ENCODE measurements at regions of chr13 and their contacts with region 1.

Region 1: DNA sequence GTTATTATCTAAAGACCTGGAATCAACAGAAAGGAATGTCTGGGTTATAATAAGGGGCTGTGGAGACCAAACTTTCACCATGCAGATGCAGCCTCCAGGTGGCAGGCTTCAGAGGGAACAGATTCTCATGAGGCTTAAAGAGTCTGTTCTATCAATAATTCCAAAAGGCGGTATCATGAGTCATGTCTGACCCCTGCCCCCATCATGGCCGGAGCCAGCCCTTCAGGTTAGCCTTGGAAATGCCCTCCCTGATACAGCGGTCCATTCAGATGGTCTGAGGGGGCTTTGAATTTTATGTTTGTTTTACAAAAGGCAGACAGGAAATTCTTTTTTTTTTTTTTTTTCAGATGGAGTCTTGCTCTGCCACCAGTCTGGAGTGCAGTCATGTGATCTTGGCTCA is 21.7 kb upstream of the LAMP1 start:
- DNase-seq: peak; percentile 74
- H3K4me3 ChIP-seq: no peak overlapping the region
- H3K27ac ChIP-seq: no peak overlapping the region
- H3K4me1 ChIP-seq: no peaks in the 10 kb centered on the region
- H3K27me3 ChIP-seq: no peaks in the 10 kb centered on the region
- CTCF ChIP-seq: peak; percentile 49 to 66
- POLR2A ChIP-seq: no peak

Region 2: DNA sequence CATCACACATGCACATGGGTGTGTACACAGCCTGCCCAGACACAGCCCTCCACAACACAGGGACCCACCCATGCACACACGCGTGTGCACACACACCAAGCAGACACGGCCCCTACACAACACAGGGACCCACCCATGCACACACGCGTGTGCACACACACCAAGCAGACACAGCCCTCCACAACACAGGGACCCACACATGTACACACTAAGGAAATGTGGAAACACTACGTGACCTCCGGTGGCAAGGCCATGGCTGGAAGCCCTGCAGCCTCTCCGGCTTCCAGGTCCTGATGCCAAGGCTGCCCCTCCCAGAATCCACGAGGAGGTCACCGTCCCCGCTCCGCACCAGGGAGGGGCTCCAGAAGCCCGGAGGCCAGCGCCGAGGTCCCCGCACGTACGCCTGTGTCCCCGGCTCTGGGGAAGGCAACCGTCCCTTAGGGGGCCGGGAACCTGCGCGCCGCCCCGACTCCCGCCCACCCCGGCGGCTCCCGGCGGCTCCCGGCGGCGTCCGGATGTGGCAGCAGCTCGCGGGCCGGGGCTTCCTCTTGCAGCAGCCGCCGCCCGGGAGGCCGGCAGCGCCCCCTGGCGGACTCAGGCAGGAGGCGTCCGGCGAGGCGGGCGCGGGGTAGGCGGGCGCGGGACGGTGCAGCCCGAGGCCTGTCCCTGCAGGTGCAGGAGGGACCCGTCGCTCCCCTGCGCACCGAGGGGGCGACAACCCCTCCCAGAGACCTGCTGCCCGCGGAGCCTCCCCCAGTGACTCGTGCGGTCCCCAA is 118.4 kb after region 1 on chr13:
- CTCF ChIA-PET with region 1: interaction called, 13 read pairs
- POLR2A ChIA-PET with region 1: no interaction called
- dilution Hi-C with region 1: no loop called
- intact Hi-C with region 1: loop called (anchors 1 kb)
- DNase-seq: peak; percentile 61
- H3K4me3 ChIP-seq: peak overlapping the region; percentile 36 to 91 (median 60)
- H3K27ac ChIP-seq: no peak overlapping the region
- H3K4me1 ChIP-seq: peaks cover 3% of the 10 kb centered on the region
- H3K27me3 ChIP-seq: no peaks in the 10 kb centered on the region
- CTCF ChIP-seq: peak; percentile 69 to 71
- POLR2A ChIP-seq: no peak

Measured in endothelial cell of umbilical vein (primary cell).